Right cardiac atrium (tissue), 5 donors: ENCODE measurements at regions of chr15 and their contacts with region 1.

Region 1: GRCh38 chr15:60585743-60586708 is 107.1 kb upstream of the ICE2 start:
- DNase-seq: peak in 1 of 3 donors; percentile 19
- ATAC-seq: peak; percentile 74 to 78
- H3K4me3 ChIP-seq: no peak overlapping the region
- H3K27ac ChIP-seq: no peak overlapping the region
- H3K4me1 ChIP-seq: peaks cover 1% of the 10 kb centered on the region
- H3K27me3 ChIP-seq: no peaks in the 10 kb centered on the region

Region 2: GRCh38 chr15:60916679-60917460 is 330.8 kb after region 1 on chr15:
- intact Hi-C with region 1: loop called (anchors 5 kb)
- DNase-seq: peak; percentile 88 to 96 (median 92)
- ATAC-seq: peak; percentile 89 to 90
- H3K4me3 ChIP-seq: no peak overlapping the region
- H3K27ac ChIP-seq: peak overlapping the region; percentile 36
- H3K4me1 ChIP-seq: peaks cover 9% of the 10 kb centered on the region
- H3K27me3 ChIP-seq: no peaks in the 10 kb centered on the region

Region 3: DNA sequence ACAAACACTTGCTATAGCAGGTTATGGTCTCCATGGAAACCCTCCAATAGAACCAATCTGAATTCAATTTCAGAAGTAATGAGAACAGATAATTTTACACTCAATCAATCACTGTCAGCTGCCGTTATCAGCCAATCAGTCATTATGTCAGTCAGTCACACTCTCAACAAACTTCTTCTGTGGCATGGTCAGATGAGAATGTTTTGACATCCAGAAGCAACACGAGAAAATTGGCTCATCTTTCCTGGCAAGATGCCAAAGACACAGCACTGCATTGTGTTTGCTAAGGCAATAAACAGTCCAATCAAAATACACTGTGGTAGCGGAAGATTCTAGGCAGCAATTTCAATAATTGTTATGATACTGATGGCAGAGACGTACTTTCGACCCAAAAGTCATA is 452.4 kb after region 1 on chr15:
- intact Hi-C with region 1: loop called in 1 of 4 experiments (anchors 10 kb)
- DNase-seq: no peak
- ATAC-seq: peak; percentile 34 to 40
- H3K4me3 ChIP-seq: no peak overlapping the region
- H3K27ac ChIP-seq: no peak overlapping the region
- H3K4me1 ChIP-seq: peaks cover 5% of the 10 kb centered on the region
- H3K27me3 ChIP-seq: no peaks in the 10 kb centered on the region

Region 4: DNA sequence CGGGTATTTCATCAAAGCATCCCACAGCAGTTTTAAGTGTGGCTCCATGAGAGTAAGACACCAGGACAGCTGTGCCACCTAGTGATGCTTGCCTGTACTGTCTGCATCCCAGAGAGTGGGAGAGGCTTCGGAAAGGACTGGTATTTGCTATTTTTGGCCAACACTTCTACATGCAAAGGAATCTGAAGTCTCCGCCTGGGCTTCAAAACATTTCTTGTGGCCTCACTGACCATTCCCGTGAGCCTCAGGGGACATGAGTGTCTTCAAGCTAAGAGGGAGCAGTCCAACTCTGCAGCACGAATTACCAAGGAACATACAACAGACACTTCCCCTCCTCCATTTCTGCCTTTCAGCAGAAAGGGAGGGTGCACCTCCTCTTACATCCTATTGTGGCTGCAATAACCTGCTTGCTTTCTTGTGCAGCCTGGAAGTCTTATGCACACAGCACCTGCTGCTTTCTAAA is 465.6 kb after region 1 on chr15:
- intact Hi-C with region 1: loop called in 3 of 4 experiments (anchors 5 to 10 kb)
- DNase-seq: peak in 2 of 3 donors; percentile 60 to 68
- ATAC-seq: peak; percentile 88
- H3K4me3 ChIP-seq: no peak overlapping the region
- H3K27ac ChIP-seq: no peak overlapping the region
- H3K4me1 ChIP-seq: no peaks in the 10 kb centered on the region
- H3K27me3 ChIP-seq: no peaks in the 10 kb centered on the region

Region 5: DNA sequence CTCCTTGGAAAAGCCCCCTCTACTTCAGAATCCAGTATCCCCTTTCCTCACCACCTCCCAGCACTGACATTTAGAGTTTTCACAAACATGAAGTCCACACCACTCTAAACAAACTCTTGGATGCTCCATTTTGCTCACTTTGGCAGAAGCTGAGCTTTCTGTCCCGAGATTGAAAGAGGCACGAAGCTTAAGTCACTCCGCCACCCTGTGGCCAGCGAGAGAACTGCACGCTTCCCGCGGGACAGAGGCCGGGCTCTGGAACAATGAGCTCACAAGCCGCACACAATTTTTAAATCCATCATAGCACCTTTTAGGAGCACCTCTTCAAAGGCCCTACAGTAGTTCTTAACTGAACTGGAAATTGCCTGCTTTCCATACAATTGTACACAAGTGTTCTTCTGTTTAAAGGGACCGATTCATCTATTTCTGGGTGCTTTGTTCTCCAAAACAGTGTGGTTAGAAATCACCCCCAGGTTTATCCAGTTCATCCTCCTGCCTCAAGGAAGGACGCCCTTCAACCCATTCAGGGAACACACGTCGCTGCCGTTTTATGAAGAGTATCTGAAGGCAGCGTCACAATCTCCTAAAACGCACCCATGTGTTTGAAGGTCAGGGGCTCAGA is 1248.2 kb after region 1 on chr15:
- intact Hi-C with region 1: loop called in 2 of 4 experiments (anchors 2 to 10 kb)
- DNase-seq: peak; percentile 77 to 93 (median 93)
- ATAC-seq: peak; percentile 76 to 77
- H3K4me3 ChIP-seq: no peak overlapping the region
- H3K27ac ChIP-seq: no peak overlapping the region
- H3K4me1 ChIP-seq: no peaks in the 10 kb centered on the region
- H3K27me3 ChIP-seq: no peaks in the 10 kb centered on the region